ENCODE measurements at regions of chr14 and their contacts with region 1.

Region 1: DNA sequence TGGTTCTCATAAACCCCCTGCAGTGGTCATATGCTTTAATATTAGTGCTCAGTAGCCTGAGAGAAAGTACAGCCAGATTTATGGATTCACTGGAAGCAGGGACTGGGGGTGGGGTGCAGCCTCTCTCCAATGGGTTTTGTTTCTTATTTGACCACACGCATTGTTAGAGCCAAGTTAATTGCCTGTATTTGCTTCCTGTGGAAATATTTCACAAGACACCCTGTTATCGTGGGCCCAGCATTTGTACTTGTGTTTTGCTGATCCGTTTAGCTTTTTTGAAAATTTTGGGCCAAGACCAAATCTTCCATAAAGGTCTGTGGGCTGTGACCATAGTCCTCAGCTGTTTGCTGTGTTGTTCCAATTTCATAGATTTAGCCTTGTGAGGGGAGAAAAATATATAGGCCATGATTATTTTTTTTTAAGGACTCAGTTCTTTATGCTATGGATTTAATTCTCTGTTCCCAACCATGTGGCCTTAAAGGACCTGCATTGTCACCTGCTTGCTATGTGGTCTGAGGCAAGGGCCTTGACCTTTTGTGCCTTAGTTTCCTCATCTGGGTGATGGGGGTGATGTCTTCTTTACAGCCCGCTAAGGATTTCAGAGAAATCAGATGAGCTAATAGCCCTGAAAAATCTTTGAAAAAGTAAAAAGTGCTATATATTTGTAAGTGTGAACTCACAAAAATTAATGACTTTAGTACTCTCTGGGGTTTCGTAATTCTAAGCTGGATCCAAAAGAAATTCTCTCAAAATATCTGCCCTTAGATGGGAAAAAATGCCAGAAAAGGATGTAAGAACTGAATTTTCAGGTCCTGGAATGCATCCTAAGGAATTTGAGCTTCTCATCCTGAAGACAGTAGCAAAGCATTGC is 370.2 kb downstream of the DPF3 start:
- DNase-seq: peak; percentile 19
- ATAC-seq: no peak; the same call in 1 of the 2 replicates
- H3K4me3 ChIP-seq: no peak overlapping the region
- H3K27ac ChIP-seq: no peak overlapping the region; the same call in 1 of the 2 replicates
- H3K4me1 ChIP-seq: peaks cover 19% of the 10 kb centered on the region
- H3K27me3 ChIP-seq: no peaks in the 10 kb centered on the region
- CTCF ChIP-seq: no peak
- POLR2A ChIP-seq: no peak
- RAD21 ChIP-seq: no peak

Region 2: DNA sequence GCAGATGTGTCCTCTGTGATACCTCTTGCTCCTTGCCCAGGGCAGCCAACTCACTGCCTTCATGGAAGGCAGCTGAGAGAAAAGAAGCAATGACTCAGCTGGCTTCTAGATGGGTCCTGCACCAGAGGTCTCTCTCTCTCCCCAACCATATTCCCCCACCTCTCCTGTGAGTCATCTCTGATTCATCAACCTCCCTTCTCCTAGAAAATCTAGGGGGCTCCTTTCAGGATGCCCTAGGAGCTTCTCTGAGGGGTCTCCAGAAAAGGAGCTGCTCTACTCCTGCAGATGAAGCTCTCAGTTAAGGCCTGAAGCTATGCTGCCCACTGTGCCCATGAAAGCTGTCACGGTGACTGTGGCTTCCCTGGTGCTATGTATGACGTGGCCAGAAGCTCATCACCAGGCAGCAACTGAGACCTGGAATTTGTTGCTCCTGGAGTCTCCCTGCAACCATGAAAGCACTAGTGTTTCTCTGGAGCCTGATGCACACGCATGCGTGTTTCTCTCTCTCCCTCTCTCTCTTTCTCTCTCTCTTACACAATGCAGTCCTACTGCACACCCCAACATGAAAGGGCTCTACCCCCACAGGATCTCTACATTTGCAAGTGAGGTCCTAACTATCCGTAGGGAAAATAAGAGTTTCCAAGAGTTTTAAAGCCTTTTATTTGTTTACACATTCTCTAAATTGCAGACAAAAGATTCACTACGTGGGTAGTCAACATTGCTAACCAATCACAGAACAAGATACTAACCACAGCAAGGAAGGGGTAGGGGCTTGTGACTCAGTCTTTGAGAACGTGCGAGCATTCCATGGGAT is 84.9 kb after region 1 on chr14:
- CTCF ChIA-PET with region 1: no interaction called
- POLR2A ChIA-PET with region 1: no interaction called
- dilution Hi-C with region 1: no loop called
- in situ Hi-C with region 1: loop called (anchors 10 kb)
- intact Hi-C with region 1: loop called (anchors 5 kb)
- DNase-seq: peak; percentile 97
- ATAC-seq: peak; percentile 76
- H3K4me3 ChIP-seq: no peak overlapping the region
- H3K27ac ChIP-seq: peak overlapping the region; percentile 95
- H3K4me1 ChIP-seq: peaks cover 27% of the 10 kb centered on the region
- H3K27me3 ChIP-seq: no peaks in the 10 kb centered on the region
- CTCF ChIP-seq: 0 out of 2 replicates have a peak, but pooled peaks have one; percentile 4
- POLR2A ChIP-seq: no peak
- RAD21 ChIP-seq: no peak; the same call in 1 of the 2 replicates

Region 3: DNA sequence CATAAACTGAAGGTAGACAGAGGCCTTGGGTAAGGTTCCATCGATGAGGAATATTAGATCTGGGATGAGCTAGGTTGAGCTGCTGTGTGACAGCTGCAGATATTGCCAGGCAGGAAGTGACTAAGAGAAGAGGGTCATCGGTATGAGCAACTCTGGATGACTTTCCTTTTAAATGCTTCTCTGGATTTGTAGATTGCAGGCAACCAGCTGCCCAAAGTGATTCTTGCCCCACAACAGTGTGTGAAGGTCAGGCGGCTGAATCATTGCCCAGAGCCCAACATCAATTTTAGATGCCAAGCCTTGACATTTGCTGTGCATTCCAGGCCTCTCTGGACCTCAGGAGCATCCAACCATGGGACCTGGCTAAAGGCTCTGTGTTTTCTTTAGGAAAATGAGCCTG is 114.4 kb after region 1 on chr14:
- CTCF ChIA-PET with region 1: no interaction called
- POLR2A ChIA-PET with region 1: no interaction called
- dilution Hi-C with region 1: no loop called
- in situ Hi-C with region 1: no loop called
- intact Hi-C with region 1: loop called (anchors 5 kb)
- DNase-seq: peak; percentile 95
- ATAC-seq: peak; percentile 54
- H3K4me3 ChIP-seq: no peak overlapping the region
- H3K27ac ChIP-seq: peak overlapping the region; percentile 11
- H3K4me1 ChIP-seq: peaks cover 31% of the 10 kb centered on the region
- H3K27me3 ChIP-seq: no peaks in the 10 kb centered on the region
- CTCF ChIP-seq: no peak
- POLR2A ChIP-seq: no peak
- RAD21 ChIP-seq: no peak

Region 4: GRCh38 chr14:72657214-72657921 is 133.7 kb after region 1 on chr14:
- CTCF ChIA-PET with region 1: no interaction called
- POLR2A ChIA-PET with region 1: no interaction called
- dilution Hi-C with region 1: no loop called
- in situ Hi-C with region 1: no loop called
- intact Hi-C with region 1: loop called (anchors 5 kb)
- DNase-seq: peak; percentile 50
- ATAC-seq: peak; percentile 66
- H3K4me3 ChIP-seq: no peak overlapping the region
- H3K27ac ChIP-seq: no peak overlapping the region
- H3K4me1 ChIP-seq: peaks cover 7% of the 10 kb centered on the region
- H3K27me3 ChIP-seq: no peaks in the 10 kb centered on the region
- CTCF ChIP-seq: no peak
- POLR2A ChIP-seq: no peak
- RAD21 ChIP-seq: no peak

Measured in IMR-90 (cell line).